Activated naive CD4-positive, alpha-beta T cell treated with anti-CD3 and anti-CD28 coated beads for 36 hours (primary cell): ENCODE measurements at regions of chr7 and their contacts with region 1.

Region 1: DNA sequence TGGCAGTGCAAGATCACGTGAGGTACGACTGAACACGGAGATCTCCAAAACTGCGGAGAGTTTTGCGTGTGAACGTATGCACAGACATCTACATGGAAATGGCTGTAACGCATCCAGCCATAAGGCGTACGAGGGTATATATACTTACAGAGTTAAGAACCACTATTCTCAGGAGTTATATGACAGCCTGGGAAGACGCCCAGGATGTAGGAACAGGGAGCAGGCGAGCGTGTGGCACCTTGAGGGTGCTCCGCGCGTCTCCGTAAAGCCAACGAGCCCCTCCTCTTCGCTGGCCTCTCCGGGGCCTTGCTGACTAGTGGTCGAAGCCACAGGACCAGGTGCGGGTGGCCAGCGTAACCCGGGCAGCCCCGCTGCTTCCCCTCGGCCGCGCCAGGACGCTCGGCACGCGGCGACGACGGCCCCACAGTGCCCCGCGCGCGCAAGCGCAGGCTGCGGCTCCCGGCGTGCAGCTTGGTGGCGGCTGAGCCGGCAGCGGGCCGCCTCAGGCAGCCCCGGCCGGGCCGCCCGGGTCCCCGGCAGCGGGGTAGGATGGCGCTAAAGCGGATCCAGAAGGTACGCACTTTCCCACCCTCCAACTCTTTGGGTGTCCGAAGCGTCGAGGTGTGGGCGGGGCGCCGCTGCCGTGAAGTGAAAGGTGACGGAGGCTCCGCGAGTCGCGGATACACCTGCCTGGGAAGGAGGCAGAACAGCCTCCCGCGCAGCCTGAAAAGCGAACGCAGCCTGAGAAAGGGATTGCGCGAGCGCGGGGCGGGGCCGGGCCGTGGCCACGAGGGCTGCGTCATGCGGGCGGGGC is at the start of gene UBE2D4:
- DNase-seq: peak; percentile 91
- H3K4me3 Mint-ChIP-seq: peak within 1 kb of the TSS; percentile 90
- H3K27ac Mint-ChIP-seq: peak within 1 kb of the TSS; percentile 88
- H3K4me1 Mint-ChIP-seq: peaks cover 33% of the 10 kb centered on the region
- H3K27me3 Mint-ChIP-seq: no peaks in the 10 kb centered on the region
- total RNA-seq, gene UBE2D4: 11.4 to 12.8 TPM

Region 2: GRCh38 chr7:42931834-42932651 is 994.1 kb before region 1 on chr7 and contains the starts of genes MRPL32 and PSMA2:
- CTCF ChIA-PET with region 1: no interaction called
- intact Hi-C with region 1: loop called (anchors 2 kb)
- DNase-seq: peak; percentile 95
- H3K4me3 Mint-ChIP-seq: peak within 1 kb of the TSS; percentile 100
- H3K27ac Mint-ChIP-seq: peak within 1 kb of the TSS; percentile 100
- H3K4me1 Mint-ChIP-seq: peaks cover 60% of the 10 kb centered on the region
- H3K27me3 Mint-ChIP-seq: no peaks in the 10 kb centered on the region
- total RNA-seq, gene MRPL32: 67.4 to 71.8 TPM
- total RNA-seq, gene PSMA2: 199 to 221 TPM

Region 3: GRCh38 chr7:43337191-43337590 is 589.0 kb before region 1 on chr7:
- CTCF ChIA-PET with region 1: no interaction called
- intact Hi-C with region 1: no loop called
- DNase-seq: no peak
- H3K4me3 Mint-ChIP-seq: no peak overlapping the region
- H3K27ac Mint-ChIP-seq: no peak overlapping the region
- H3K4me1 Mint-ChIP-seq: no peaks in the 10 kb centered on the region
- H3K27me3 Mint-ChIP-seq: peaks cover 16% of the 10 kb centered on the region

Region 4: DNA sequence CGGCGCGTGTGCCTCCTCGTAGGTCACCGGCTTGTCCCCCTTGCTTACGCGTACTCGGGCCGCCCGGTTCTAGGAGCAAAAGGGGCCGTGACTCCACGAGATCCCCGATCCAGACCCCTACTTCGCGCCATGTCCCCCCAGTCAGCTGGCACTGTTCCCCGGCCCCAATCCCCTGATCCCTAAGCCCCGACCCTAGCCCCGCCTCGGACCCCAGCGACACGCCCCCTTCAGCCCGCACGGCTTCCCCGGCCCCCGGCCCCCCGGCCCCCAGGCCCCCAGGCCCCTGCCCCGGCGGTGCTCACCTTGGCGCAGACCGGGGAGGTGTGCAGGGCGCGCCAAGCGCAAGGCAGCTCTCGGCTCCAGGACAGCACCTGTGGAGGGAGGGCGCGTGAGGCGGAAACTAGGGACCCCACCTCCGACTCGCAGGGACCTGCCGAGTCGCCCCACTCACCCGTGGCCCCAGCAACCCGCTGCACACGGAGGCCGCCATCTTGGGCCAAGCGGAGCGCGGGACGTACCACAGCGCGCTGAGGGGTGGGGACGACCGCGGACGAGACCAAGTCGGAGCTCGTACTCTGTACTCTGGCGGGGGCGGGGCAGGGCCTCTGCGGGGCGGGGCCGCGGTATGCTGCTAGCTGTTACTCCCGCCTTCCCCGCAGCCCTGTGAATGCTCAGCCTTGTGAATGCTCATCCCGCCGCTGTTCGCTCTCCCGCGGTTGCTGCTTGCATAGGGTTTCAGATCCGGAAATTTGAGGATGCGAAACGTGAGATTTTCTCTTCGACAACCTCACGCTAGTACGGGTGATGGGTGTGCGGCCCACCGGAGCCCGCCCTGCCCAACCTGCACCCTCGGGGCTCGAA is 57.0 kb before region 1 on chr7 and contains the start of gene MRPS24:
- CTCF ChIA-PET with region 1: no interaction called
- intact Hi-C with region 1: loop called (anchors 1 kb)
- DNase-seq: peak; percentile 98
- H3K4me3 Mint-ChIP-seq: peak within 1 kb of the TSS; percentile 81
- H3K27ac Mint-ChIP-seq: peak within 1 kb of the TSS; percentile 89
- H3K4me1 Mint-ChIP-seq: peaks cover 20% of the 10 kb centered on the region
- H3K27me3 Mint-ChIP-seq: no peaks in the 10 kb centered on the region
- total RNA-seq, gene MRPS24: 153 TPM

Region 5: DNA sequence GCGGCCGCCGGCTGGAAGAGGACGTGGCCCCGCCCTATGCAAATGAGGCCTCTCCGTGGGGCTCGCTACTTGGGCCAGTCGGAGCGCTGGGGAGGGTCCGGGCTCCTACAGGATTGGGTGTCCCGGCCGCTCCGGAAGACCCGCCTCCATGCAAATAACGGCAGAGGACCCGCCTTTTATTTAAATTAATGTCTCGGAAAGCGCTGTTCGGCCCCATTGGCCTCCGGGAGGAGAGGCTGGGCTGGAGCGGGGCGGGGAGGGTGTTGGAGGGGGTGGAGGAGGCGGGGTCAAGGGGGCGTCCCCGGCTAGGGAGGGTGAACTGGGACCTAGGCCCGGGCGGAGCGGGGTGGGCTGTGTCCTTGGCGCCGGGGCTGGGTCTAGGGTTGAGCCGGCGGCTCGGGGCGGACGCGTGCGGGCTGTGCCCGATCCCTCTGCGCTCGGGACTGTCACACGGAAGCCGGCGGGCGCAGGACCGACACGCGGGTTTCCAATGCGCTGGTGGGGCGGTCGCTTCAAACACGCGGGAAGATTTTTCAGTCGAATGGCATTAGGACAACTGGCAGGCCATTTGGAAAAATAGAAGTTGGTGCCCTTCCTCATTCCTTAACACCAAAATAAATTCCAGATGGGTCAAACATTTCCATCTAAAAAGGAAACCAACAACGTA is 156.5 kb after region 1 on chr7:
- CTCF ChIA-PET with region 1: no interaction called
- intact Hi-C with region 1: loop called (anchors 5 kb)
- DNase-seq: peak; percentile 99
- H3K4me3 Mint-ChIP-seq: peak overlapping the region; percentile 75
- H3K27ac Mint-ChIP-seq: peak overlapping the region; percentile 59
- H3K4me1 Mint-ChIP-seq: peaks cover 31% of the 10 kb centered on the region
- H3K27me3 Mint-ChIP-seq: no peaks in the 10 kb centered on the region

Region 6: GRCh38 chr7:44615149-44615611 is 689.0 kb after region 1 on chr7:
- CTCF ChIA-PET with region 1: no interaction called
- intact Hi-C with region 1: loop called (anchors 5 kb)
- DNase-seq: peak; percentile 57
- H3K4me3 Mint-ChIP-seq: no peak overlapping the region
- H3K27ac Mint-ChIP-seq: peak overlapping the region; percentile 25
- H3K4me1 Mint-ChIP-seq: peaks cover 60% of the 10 kb centered on the region
- H3K27me3 Mint-ChIP-seq: no peaks in the 10 kb centered on the region